Activated CD4-positive, alpha-beta memory T cell treated with anti-CD3 and anti-CD28 coated beads, Interleukin-2, amount 10 ng/mL, durations not matched to agents 7 days and 5 days (primary cell): ENCODE measurements at regions of chr17 and their contacts with region 1.

Region 1: GRCh38 chr17:2025622-2026310 is 632 bp upstream of the RTN4RL1 start:
- DNase-seq: peak; percentile 32
- H3K4me3 Mint-ChIP-seq: peak overlapping the region; percentile 61
- H3K27ac Mint-ChIP-seq: no peak overlapping the region
- H3K4me1 Mint-ChIP-seq: peaks cover 23% of the 10 kb centered on the region
- H3K27me3 Mint-ChIP-seq: peaks cover 52% of the 10 kb centered on the region

Region 2: DNA sequence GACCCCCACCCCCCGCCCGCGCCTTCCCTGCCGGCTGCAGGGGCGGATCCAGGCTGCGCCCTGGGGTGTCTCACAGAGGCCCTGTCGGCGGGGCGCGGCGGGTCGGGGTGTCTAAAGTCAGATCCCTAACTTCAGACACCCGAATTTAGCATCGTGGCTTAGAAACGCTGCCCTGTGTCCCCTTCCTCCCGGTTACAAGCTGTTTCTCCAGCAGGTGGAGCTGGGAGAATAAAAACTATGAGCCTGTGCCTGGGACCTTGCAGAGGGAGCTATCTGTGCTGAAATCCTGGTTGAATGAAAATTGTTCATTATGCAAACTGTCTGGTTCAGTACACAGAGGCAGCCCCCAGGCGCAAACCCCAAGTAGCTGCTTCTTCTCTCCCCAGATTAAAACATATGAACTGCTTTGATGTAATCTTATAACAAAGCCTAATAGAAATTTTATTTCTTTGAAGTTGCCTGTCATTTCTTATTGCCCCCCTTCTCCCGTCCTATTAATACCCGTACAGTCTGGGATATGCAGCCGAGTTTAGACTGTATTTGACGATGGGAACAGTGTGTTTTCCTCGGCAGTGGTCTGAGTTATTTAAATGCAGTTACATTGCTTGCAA is 117.0 kb before region 1 on chr17:
- CTCF ChIA-PET with region 1: interaction called, 19 read pairs
- POLR2A ChIA-PET with region 1: no interaction called
- DNase-seq: peak; percentile 46
- H3K4me3 Mint-ChIP-seq: no peak overlapping the region
- H3K27ac Mint-ChIP-seq: no peak overlapping the region
- H3K4me1 Mint-ChIP-seq: peaks cover 7% of the 10 kb centered on the region
- H3K27me3 Mint-ChIP-seq: peaks cover 65% of the 10 kb centered on the region

Region 3: DNA sequence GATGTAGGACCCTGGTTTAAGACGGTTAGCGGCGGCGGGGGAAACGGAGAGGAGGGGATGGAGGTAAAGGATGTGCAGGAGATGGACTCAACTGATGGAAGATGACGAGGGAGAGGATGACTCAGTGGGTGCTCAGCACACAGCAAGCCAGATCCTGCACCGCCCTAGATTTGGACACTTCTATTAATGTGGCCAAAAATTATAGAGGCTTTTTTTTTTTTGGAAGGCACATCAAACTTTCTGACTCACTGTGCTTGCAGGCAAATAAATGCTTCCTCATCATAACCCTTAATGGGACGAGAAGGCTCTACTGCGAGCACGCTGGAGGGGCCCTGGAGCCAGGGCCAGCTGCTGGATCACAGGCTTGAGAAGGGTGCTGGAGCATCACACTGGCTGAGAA is 36.6 kb before region 1 on chr17:
- CTCF ChIA-PET with region 1: no interaction called
- POLR2A ChIA-PET with region 1: no interaction called
- DNase-seq: no peak
- H3K4me3 Mint-ChIP-seq: no peak overlapping the region
- H3K27ac Mint-ChIP-seq: no peak overlapping the region
- H3K4me1 Mint-ChIP-seq: no peaks in the 10 kb centered on the region
- H3K27me3 Mint-ChIP-seq: peaks cover 14% of the 10 kb centered on the region

Region 4: DNA sequence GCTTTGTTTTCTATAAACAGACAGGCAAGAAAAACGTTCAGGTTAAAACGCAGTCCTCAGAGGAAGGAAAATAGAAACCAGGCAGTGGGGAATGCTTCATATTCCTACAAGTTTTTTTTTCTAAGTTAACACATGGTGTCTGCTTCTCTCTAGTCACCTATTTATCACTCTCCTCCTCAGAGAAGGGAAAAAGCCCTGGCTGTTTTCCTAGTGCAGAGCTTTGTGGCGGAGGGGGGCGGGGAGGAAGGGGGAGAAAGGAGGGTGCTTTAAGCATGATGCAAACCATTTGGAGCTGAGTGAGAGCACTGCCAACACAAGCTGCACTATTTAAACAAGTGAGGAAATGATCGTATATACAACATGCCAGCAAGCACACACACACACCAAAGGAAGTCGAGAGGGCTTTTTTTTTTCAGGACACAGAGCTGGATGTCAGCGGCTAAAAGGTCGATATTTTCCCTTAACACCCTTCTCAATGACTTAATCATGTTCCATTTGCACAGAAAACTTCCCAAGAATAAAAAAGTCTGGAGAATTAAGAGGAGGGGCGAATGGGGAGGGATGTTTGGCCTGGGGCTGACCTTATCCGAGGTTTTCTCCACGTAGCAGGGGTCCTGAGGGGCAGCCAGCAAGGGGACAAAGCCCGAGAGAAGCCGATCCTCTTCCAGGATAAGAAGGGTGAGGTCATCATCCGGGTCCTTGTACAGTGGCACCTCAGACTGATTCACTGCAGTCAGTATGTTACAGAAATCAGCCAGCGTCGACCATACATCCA is 146.5 kb after region 1 on chr17:
- CTCF ChIA-PET with region 1: no interaction called
- POLR2A ChIA-PET with region 1: no interaction called
- DNase-seq: no peak
- H3K4me3 Mint-ChIP-seq: no peak overlapping the region
- H3K27ac Mint-ChIP-seq: no peak overlapping the region
- H3K4me1 Mint-ChIP-seq: peaks cover 27% of the 10 kb centered on the region
- H3K27me3 Mint-ChIP-seq: no peaks in the 10 kb centered on the region